ENCODE measurements at regions of chr7 and their contacts with region 1.

Region 1: DNA sequence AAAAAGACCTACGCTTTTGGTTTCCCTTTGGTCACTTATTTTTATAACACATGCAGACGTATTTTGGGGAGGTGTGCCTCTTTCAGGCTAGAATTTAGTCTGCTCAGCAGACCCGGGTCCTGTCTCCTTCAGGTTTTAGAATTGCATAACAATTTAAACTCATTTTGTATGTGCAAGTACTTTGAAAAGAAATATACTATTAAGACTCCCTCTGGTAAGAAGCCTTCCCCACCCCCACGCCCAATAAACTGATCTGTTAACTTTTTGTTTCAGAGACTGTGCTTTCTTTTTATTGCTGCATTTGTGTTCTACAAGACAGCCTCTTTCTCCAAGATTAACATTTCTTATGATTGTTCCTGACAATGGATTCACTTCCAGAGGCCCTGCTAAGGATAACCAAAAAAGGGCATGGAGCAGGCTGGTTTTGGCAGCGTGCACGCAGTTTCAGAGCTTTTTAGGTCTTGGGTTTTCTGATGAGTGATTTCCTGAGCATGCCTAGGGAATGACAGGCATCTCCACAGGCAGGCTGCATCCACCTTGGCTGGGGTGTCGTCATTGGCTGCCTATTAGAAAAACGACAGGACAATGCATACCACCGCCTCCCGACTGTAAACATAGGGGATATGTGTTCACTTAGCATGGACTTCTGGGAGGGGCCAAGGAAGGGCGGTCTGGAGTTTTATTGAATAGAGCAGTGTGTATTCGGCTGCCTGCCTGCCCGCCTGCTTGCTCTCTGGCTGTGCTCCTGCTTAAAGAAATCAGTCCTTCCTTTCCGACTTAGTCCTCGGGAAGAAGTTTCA is at the start of gene CALD1:
- DNase-seq: peak; percentile 99
- ATAC-seq: peak; percentile 91
- H3K4me3 ChIP-seq: peak within 1 kb of the TSS; percentile 66
- H3K27ac ChIP-seq: peak within 1 kb of the TSS; percentile 86
- H3K4me1 ChIP-seq: peaks cover 21% of the 10 kb centered on the region
- H3K27me3 ChIP-seq: no peaks in the 10 kb centered on the region
- CTCF ChIP-seq: no peak
- POLR2A ChIP-seq: peak; percentile 98
- RAD21 ChIP-seq: no peak; the same call in 1 of the 2 replicates
- total RNA-seq, gene CALD1: 487 and 532 TPM in 2 replicates

Region 2: DNA sequence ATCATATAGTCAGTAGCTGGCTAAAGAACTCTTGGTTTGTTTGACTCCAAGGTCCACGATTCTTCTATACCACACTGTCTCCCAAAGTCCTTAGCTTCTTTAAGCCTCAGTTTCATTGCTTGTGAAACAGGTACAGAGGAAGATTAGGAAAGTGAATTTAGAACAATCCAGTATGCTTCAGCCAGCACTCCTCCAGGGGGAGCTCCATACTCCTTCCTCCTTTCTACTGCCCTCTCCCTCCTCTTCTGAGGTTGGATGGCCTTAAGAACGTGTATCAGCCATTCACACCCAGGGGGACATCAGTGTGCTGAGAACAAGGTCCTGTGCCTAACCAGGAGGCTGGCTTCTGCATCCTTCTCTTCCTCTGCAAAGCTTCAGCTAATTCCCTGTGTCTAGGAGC is 54.5 kb before region 1 on chr7:
- CTCF ChIA-PET with region 1: no interaction called
- POLR2A ChIA-PET with region 1: interaction called, 6 read pairs
- dilution Hi-C with region 1: no loop called
- in situ Hi-C with region 1: no loop called
- intact Hi-C with region 1: loop called (anchors 2 kb)
- DNase-seq: peak; percentile 54
- ATAC-seq: peak; percentile 52
- H3K4me3 ChIP-seq: no peak overlapping the region
- H3K27ac ChIP-seq: no peak overlapping the region
- H3K4me1 ChIP-seq: peaks cover 16% of the 10 kb centered on the region
- H3K27me3 ChIP-seq: no peaks in the 10 kb centered on the region
- CTCF ChIP-seq: peak; percentile 64
- POLR2A ChIP-seq: no peak
- RAD21 ChIP-seq: peak; percentile 63

Region 3: DNA sequence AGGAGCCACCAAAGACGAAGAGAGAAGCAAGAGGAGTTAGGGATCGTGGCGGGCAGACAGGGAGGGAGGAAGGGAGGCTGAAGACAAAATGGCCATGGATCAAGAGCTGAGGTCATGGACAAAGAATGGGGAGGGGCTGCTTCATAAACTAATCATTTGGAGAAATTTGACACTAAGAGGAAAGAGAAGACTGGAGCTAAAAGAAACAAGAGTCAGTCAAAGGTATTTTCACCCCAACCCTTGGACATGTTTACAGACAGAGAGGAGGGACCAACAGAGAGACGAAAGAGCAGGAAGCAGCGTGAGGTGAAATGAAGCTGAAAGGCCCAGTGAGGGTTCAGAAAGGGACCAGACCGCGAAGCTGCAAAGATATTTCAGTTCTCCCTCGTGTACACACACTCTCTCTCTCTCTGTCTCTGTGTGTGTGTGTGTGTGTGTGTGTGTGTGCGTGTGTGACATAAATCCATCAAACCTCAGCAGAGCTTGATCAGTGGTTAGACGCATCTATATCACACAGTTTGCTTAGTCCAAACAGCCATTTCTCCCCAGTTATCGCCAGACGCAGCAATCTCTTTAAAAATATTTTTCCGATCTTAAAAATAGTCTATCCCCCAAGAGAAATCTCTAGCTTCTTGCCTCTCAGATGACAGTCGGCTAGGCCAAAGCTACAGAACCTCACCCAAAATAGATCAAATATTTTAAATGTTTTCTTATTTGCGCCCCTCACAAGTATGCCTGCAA is 12.2 kb before region 1 on chr7:
- CTCF ChIA-PET with region 1: no interaction called
- POLR2A ChIA-PET with region 1: interaction called, 16 read pairs
- dilution Hi-C with region 1: no loop called
- in situ Hi-C with region 1: no loop called
- intact Hi-C with region 1: no loop called
- DNase-seq: peak; percentile 57
- ATAC-seq: peak; percentile 64
- H3K4me3 ChIP-seq: no peak overlapping the region
- H3K27ac ChIP-seq: peak overlapping the region; percentile 33; the same call in 1 of the 2 replicates
- H3K4me1 ChIP-seq: peaks cover 12% of the 10 kb centered on the region
- H3K27me3 ChIP-seq: no peaks in the 10 kb centered on the region
- CTCF ChIP-seq: no peak
- POLR2A ChIP-seq: no peak
- RAD21 ChIP-seq: no peak

Region 4: GRCh38 chr7:134866617-134867016 is 87.5 kb after region 1 on chr7:
- CTCF ChIA-PET with region 1: no interaction called
- POLR2A ChIA-PET with region 1: no interaction called
- dilution Hi-C with region 1: no loop called
- in situ Hi-C with region 1: no loop called
- intact Hi-C with region 1: loop called (anchors 1 kb)
- DNase-seq: peak; percentile 55
- ATAC-seq: peak; percentile 61
- H3K4me3 ChIP-seq: no peak overlapping the region
- H3K27ac ChIP-seq: peak overlapping the region; percentile 86
- H3K4me1 ChIP-seq: peaks cover 19% of the 10 kb centered on the region
- H3K27me3 ChIP-seq: no peaks in the 10 kb centered on the region
- CTCF ChIP-seq: no peak
- POLR2A ChIP-seq: no peak
- RAD21 ChIP-seq: no peak